Left ventricle myocardium superior (tissue), 1 donor: ENCODE measurements at regions of chr13 and their contacts with region 1.

Region 1: GRCh38 chr13:30465585-30466357 is at the start of gene HMGB1:
- DNase-seq: peak; percentile 98
- ATAC-seq: peak; percentile 96
- total RNA-seq, gene HMGB1: 180 TPM

Region 2: DNA sequence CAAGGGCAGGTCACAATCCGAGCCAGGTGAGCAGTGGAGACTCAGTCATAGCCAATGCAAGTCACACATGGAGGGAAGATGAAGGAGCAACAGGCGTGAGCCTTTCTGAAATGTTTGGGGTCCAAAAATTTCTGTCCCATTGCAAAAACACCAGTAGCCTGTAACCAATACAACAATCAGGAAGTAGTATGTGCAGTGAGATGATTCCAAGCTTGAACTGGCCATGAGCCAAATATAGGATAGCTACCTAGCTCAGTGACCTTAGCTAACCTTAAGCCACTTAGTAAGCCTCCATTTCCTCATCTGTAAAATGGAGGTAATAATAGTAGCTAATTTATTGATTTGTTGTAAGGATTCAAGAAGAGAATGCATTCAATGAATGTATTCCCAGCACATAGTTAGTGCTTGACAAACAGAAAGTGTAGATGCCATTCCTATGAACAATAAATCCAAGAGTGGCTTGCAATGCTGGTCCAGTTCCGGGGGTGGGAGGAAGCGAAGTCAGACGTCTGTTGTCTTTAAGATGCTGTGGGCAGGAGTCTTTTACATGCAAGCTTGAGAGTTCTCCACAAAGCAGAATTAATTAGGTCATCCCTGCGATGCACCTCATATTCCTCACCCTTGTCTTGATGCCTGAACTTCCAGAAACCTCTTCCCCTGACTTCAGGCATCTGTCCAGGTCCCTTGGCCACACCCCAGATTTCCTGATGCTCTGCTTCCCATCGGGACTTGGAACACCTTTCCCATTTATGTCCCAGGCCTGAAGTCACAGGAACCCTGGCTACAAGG is 419.7 kb before region 1 on chr13:
- intact Hi-C with region 1: no loop called
- DNase-seq: no peak
- ATAC-seq: no peak

Region 3: GRCh38 chr13:30105381-30105780 is 360.4 kb before region 1 on chr13:
- intact Hi-C with region 1: no loop called
- DNase-seq: no peak
- ATAC-seq: peak; percentile 81

Region 4: GRCh38 chr13:30247406-30247805 is 218.4 kb before region 1 on chr13:
- intact Hi-C with region 1: no loop called
- DNase-seq: no peak
- ATAC-seq: no peak

Region 5: DNA sequence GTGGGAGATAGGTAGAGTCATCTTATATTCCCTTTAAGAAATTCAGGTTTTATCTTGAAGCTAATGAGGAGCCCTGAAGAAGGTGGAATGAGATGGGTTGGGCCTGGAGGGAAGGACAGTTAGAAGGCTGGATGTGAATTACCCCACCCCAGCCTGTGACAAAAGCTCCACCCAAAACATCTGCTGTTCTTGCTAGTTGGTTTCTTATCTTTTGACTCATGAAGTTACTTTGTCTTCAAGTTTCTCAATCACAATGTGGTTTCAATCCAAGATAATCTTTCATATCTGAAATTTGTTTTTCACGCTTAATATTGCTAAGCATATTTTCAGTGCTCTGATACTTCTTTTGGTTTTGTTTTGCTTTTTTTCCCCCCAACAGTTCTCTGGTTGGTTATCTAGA is 38.3 kb after region 1 on chr13:
- intact Hi-C with region 1: no loop called
- DNase-seq: no peak
- ATAC-seq: no peak

Region 6: GRCh38 chr13:30617315-30618185 is 151.8 kb after region 1 on chr13 and contains the start of gene USPL1:
- intact Hi-C with region 1: loop called (anchors 2 kb)
- DNase-seq: peak; percentile 99
- ATAC-seq: peak; percentile 96
- total RNA-seq, gene USPL1: 10.5 TPM